Psoas muscle (tissue), 8 donors: ENCODE measurements at regions of chr7 and their contacts with region 1.

Region 1: GRCh38 chr7:6172224-6172923 is 100.0 kb downstream of the CYTH3 start:
- DNase-seq: no peak
- ATAC-seq: no peak
- H3K4me3 ChIP-seq: no peak overlapping the region
- H3K27ac ChIP-seq: no peak overlapping the region
- H3K4me1 ChIP-seq: peaks cover 28% of the 10 kb centered on the region
- H3K27me3 ChIP-seq: no peaks in the 10 kb centered on the region
- CTCF ChIP-seq: no peak

Region 2: DNA sequence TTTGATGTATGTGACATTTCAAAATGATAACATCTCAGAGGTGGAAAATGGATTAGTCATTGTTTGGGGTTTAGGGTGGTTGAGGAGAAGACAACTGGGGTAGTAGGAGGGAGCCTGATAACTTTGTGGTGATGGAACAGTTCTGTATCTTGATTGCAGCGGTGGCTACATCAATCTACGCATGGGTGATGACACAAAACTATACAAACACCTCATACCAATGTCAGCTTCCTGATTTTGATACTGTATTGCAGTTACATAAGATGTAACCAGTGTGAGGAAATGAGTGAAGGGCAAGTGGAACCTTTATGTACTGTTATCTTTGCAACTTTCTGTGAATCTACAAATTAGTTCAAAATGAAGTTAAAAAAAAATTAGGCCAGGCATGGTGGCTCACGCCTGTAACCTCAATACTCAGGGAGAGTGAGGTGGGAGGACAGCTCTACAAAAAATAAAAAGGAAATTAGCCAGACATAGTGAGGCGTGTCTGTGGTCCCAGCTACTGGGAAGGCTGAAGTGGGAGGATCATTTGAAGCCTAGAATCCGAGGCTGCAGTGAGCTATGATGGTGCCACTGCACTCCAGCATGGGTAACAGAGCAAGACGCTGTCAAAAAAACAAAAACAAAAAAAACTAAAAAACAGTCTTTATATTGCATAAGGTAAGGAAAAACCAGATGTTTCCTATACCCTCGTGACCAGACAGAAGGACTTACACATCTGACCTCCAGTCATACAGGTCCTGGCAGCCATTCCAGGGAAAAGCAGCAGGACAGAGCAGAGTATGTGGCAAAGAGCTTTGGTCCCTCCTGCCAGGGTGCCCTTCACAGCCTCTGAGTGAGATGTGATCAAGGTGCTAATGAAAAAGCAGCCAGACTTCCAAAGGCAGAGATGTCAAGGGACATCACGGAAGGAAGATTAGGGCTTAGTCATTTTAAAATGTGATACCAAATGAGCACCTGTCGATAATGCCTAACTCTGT is 49.3 kb after region 1 on chr7:
- intact Hi-C with region 1: loop called in 1 of 2 experiments (anchors 5 kb)
- DNase-seq: no peak
- ATAC-seq: peak in 1 of 4 donors; percentile 35
- H3K4me3 ChIP-seq: no peak overlapping the region
- H3K27ac ChIP-seq: no peak overlapping the region
- H3K4me1 ChIP-seq: peaks cover 35% of the 10 kb centered on the region
- H3K27me3 ChIP-seq: no peaks in the 10 kb centered on the region
- CTCF ChIP-seq: no peak